ENCODE measurements at regions of chr17 and their contacts with region 1.

Region 1: GRCh38 chr17:29241015-29241963 is 5.4 kb upstream of the CRYBA1 start:
- DNase-seq: peak in 1 of 2 experiments; percentile 28
- H3K4me3 ChIP-seq: no peak overlapping the region
- H3K4me3 Mint-ChIP-seq: no peak overlapping the region
- H3K27ac Mint-ChIP-seq: no peak overlapping the region
- H3K4me1 ChIP-seq: no peaks in the 10 kb centered on the region
- H3K4me1 Mint-ChIP-seq: peaks cover 7% of the 10 kb centered on the region
- H3K27me3 ChIP-seq: no peaks in the 10 kb centered on the region
- H3K27me3 Mint-ChIP-seq: no peaks in the 10 kb centered on the region
- CTCF ChIP-seq: no peak

Region 2: DNA sequence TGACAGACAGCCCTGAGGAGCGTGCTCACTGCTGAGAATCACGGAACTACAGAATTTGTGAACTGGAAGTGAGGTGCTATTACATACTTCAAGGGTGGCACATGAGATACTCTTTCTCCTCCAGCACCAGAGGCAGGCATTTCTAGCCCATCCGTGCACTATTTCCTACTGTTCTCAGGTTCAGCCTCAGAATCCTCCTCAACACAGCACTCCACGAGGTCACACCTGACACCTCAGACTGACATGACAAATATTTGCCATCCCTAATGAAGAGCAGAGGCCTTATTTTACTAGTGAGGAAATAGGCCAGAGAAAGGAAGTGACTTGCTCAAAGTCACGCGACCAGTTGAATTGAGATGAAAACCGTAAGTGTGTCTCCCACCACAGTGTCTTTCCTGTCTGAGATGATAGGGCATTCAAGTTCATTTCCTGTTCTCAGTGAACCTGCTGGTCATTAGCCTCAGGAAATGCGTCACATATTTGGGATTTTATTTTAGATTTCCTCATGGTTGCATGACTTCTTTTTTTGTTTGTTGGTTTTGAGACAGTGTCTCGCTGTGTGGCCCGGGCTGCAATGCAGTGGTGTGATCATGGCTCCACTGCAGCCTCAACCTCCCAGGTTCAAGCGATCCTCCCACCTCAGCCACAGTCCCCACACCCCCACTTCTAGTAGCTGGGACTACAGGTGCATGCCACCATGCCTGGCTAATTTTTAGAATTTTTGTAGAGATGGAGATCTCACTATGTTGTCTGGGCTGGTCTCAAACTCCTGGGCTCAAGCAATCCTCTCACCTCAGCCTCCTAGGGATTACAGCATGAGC is 258.9 kb before region 1 on chr17:
- CTCF ChIA-PET with region 1: no interaction called
- POLR2A ChIA-PET with region 1: no interaction called
- intact Hi-C with region 1: loop called (anchors 10 kb)
- DNase-seq: no peak
- H3K4me3 ChIP-seq: no peak overlapping the region
- H3K4me3 Mint-ChIP-seq: no peak overlapping the region
- H3K27ac Mint-ChIP-seq: no peak overlapping the region
- H3K4me1 ChIP-seq: no peaks in the 10 kb centered on the region
- H3K4me1 Mint-ChIP-seq: no peaks in the 10 kb centered on the region
- H3K27me3 ChIP-seq: no peaks in the 10 kb centered on the region; the same call in 1 of the 2 replicates
- H3K27me3 Mint-ChIP-seq: peaks cover 9% of the 10 kb centered on the region
- CTCF ChIP-seq: no peak

Measured in Caco-2 (cell line).